IMR-90 (cell line): ENCODE measurements at regions of chr7 and their contacts with region 1.

Region 1: GRCh38 chr7:55280031-55280454 is 85.1 kb upstream of the LANCL2 start:
- DNase-seq: peak; percentile 67
- ATAC-seq: peak; percentile 98
- H3K4me3 ChIP-seq: no peak overlapping the region
- H3K27ac ChIP-seq: no peak overlapping the region
- H3K4me1 ChIP-seq: no peaks in the 10 kb centered on the region
- H3K27me3 ChIP-seq: peaks cover 25% of the 10 kb centered on the region
- CTCF ChIP-seq: peak; percentile 93
- POLR2A ChIP-seq: no peak
- RAD21 ChIP-seq: peak; percentile 96

Region 2: DNA sequence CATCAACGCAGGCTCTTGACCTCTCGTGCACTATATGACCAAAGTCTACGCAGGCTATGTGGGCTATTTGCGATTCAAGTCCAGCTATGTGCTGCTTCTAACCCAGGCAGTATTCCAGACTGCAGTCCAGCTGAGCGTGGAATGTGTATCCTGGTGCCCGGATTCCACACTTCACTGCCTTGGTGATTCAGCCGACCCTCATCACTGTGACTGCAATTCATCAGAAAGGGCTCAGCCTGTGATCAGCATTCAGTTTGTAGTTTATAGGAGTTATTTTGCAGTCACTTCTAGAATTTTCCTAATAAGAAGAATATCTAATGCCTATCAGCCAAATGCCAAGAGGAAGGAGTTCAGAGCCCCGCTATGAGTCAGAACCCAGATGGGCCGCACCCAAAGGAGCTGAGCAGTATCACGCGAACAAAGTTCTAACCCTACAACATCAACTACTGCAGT is 34.7 kb before region 1 on chr7:
- CTCF ChIA-PET with region 1: no interaction called
- POLR2A ChIA-PET with region 1: no interaction called
- dilution Hi-C with region 1: no loop called
- in situ Hi-C with region 1: no loop called
- intact Hi-C with region 1: no loop called
- DNase-seq: peak; percentile 93
- ATAC-seq: peak; percentile 77
- H3K4me3 ChIP-seq: no peak overlapping the region
- H3K27ac ChIP-seq: no peak overlapping the region
- H3K4me1 ChIP-seq: peaks cover 6% of the 10 kb centered on the region
- H3K27me3 ChIP-seq: no peaks in the 10 kb centered on the region
- CTCF ChIP-seq: no peak
- POLR2A ChIP-seq: no peak
- RAD21 ChIP-seq: no peak

Region 3: GRCh38 chr7:55409482-55410225 is 129.6 kb after region 1 on chr7:
- CTCF ChIA-PET with region 1: interaction called, 11 read pairs
- POLR2A ChIA-PET with region 1: no interaction called
- dilution Hi-C with region 1: no loop called
- in situ Hi-C with region 1: loop called (anchors 5 kb)
- intact Hi-C with region 1: no loop called
- DNase-seq: peak; percentile 35
- ATAC-seq: peak; percentile 37; the same call in 1 of the 2 replicates
- H3K4me3 ChIP-seq: no peak overlapping the region
- H3K27ac ChIP-seq: no peak overlapping the region
- H3K4me1 ChIP-seq: no peaks in the 10 kb centered on the region
- H3K27me3 ChIP-seq: no peaks in the 10 kb centered on the region
- CTCF ChIP-seq: peak; percentile 25; the same call in 1 of the 2 replicates
- POLR2A ChIP-seq: no peak
- RAD21 ChIP-seq: 0 out of 2 replicates have a peak, but pooled peaks have one; percentile 25

Region 4: GRCh38 chr7:55593515-55594318 is 313.7 kb after region 1 on chr7:
- CTCF ChIA-PET with region 1: no interaction called
- POLR2A ChIA-PET with region 1: no interaction called
- dilution Hi-C with region 1: no loop called
- in situ Hi-C with region 1: loop called (anchors 10 kb)
- intact Hi-C with region 1: loop called (anchors 2 kb)
- DNase-seq: peak; percentile 77
- ATAC-seq: peak; percentile 65; the same call in 1 of the 2 replicates
- H3K4me3 ChIP-seq: no peak overlapping the region
- H3K27ac ChIP-seq: no peak overlapping the region
- H3K4me1 ChIP-seq: peaks cover 4% of the 10 kb centered on the region; the same call in 1 of the 2 replicates
- H3K27me3 ChIP-seq: no peaks in the 10 kb centered on the region; the same call in 1 of the 2 replicates
- CTCF ChIP-seq: peak; percentile 61
- POLR2A ChIP-seq: no peak
- RAD21 ChIP-seq: peak; percentile 51

Region 5: DNA sequence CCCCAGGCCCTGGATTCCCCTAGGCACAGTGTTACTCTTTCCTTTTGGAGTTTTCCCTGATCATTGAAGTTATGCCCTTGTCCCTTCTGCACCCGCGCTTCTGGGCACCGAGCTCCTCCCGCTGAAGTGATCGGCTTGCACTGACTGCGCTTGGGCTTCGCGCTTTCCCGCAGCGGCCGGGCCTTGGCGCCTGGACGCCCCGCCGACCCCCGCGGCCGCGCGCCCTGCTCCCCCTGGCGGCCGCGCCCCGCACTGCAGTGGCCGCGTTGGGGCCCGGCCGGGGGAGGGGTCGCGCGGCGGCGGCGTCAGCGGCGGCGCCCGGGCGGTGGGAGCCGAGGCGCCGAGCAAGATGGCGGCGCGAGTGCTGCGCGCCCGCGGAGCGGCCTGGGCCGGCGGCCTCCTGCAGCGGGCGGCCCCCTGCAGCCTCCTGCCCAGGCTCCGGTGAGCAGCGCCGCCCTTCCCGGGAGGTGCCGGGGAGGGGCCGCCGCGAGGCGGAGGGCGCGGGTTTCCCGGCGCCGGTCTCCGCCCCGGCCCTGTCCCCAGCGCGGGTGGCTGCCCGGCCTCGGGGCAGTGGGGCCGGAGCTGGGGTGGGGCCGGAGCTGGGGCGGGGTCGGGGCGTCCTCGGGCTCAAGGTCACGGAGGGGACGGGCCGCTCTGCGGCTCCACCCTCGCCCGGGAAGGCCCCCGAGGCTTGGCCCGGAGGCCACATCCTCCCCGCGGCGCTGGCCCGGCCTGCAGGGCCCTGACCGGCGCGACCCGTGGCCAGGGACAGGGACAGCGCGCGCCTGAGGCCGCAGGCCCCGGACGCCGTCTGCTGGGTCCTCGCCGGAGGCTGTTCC is 684.4 kb after region 1 on chr7 and contains the start of gene NIPSNAP2:
- CTCF ChIA-PET with region 1: interaction called, 4 read pairs
- POLR2A ChIA-PET with region 1: no interaction called
- dilution Hi-C with region 1: no loop called
- in situ Hi-C with region 1: loop called (anchors 25 kb)
- intact Hi-C with region 1: loop called (anchors 2 kb)
- DNase-seq: peak; percentile 35
- ATAC-seq: peak; percentile 95
- H3K4me3 ChIP-seq: peak within 1 kb of the TSS; percentile 95
- H3K27ac ChIP-seq: peak within 1 kb of the TSS; percentile 86
- H3K4me1 ChIP-seq: peaks cover 4% of the 10 kb centered on the region; the same call in 1 of the 2 replicates
- H3K27me3 ChIP-seq: no peaks in the 10 kb centered on the region
- CTCF ChIP-seq: peak; percentile 75
- POLR2A ChIP-seq: peak; percentile 76
- RAD21 ChIP-seq: peak; percentile 49
- total RNA-seq, gene NIPSNAP2: 42.8 and 53.0 TPM in 2 replicates

Region 6: GRCh38 chr7:56092789-56093531 is 812.9 kb after region 1 on chr7 and contains the start of gene PHKG1:
- CTCF ChIA-PET with region 1: no interaction called
- POLR2A ChIA-PET with region 1: no interaction called
- dilution Hi-C with region 1: no loop called
- in situ Hi-C with region 1: loop called (anchors 25 kb)
- intact Hi-C with region 1: no loop called
- DNase-seq: peak; percentile 81
- ATAC-seq: peak; percentile 94
- H3K4me3 ChIP-seq: no peak within 1 kb of the TSS
- H3K27ac ChIP-seq: peak within 1 kb of the TSS; percentile 15; the same call in 1 of the 2 replicates
- H3K4me1 ChIP-seq: peaks cover 9% of the 10 kb centered on the region
- H3K27me3 ChIP-seq: no peaks in the 10 kb centered on the region
- CTCF ChIP-seq: peak; percentile 27
- POLR2A ChIP-seq: no peak
- RAD21 ChIP-seq: peak; percentile 38
- total RNA-seq, gene PHKG1: under 0.01 and 0.72 TPM in 2 replicates